PC-3 (cell line): ENCODE measurements at regions of chr18 and their contacts with region 1.

Region 1: GRCh38 chr18:55048892-55049291 is 89.6 kb upstream of the CCDC68 start:
- DNase-seq: peak; percentile 79
- ATAC-seq: peak; percentile 91
- H3K4me3 ChIP-seq: no peak overlapping the region
- H3K27ac ChIP-seq: peak overlapping the region; percentile 35
- H3K4me1 ChIP-seq: peaks cover 12% of the 10 kb centered on the region
- H3K27me3 ChIP-seq: no peaks in the 10 kb centered on the region
- CTCF ChIP-seq: no peak

Region 2: DNA sequence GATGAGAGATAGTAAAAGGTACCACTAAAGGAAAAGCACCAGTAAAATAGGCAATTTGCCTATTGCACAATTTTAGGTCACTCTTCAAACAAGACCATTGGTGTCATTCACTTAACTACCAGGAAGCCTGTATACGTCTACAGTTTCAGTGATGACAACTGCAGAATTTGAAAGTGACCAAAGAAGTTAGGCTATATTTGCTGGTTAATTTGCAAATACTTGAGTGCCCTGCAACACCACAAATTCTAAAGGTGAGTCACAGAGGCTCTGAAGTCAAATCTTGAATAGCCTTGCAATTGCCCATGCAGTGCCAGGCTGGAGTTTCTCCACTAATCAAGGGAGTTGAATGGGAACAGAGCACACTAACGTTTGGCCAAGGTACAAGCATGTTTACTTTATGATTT is 39.1 kb after region 1 on chr18:
- CTCF ChIA-PET with region 1: no interaction called
- POLR2A ChIA-PET with region 1: no interaction called
- intact Hi-C with region 1: loop called (anchors 5 kb)
- DNase-seq: peak; percentile 46
- ATAC-seq: peak; percentile 82
- H3K4me3 ChIP-seq: no peak overlapping the region
- H3K27ac ChIP-seq: no peak overlapping the region
- H3K4me1 ChIP-seq: no peaks in the 10 kb centered on the region
- H3K27me3 ChIP-seq: no peaks in the 10 kb centered on the region
- CTCF ChIP-seq: no peak

Region 3: DNA sequence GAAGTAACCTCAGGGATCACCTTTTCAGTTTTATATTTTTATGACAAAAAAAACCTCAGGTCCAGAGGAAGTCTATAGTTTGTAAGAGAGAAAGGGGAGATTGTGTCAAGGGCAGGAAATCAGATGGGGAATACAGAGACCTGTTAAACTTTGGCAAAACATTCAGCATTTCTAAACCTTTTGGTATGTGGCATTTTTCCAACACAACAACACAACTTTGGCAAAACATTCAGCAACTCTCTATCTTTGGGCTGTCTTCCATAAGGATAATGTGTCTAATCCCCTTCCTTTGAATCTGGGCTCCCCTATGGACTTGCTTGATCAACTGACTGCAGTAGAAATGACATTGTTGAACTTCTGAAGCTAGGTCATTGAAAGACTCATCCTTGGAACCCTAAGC is 130.9 kb after region 1 on chr18:
- CTCF ChIA-PET with region 1: no interaction called
- POLR2A ChIA-PET with region 1: no interaction called
- intact Hi-C with region 1: no loop called
- DNase-seq: no peak
- ATAC-seq: no peak
- H3K4me3 ChIP-seq: no peak overlapping the region
- H3K27ac ChIP-seq: no peak overlapping the region
- H3K4me1 ChIP-seq: no peaks in the 10 kb centered on the region
- H3K27me3 ChIP-seq: no peaks in the 10 kb centered on the region
- CTCF ChIP-seq: no peak